ENCODE measurements at regions of chr9 and their contacts with region 1.

Region 1: GRCh38 chr9:33225319-33226149 is 14.4 kb upstream of the SPINK4 start:
- DNase-seq: peak; percentile 85
- ATAC-seq: peak; percentile 75
- H3K4me3 Mint-ChIP-seq: no peak overlapping the region
- H3K27ac Mint-ChIP-seq: no peak overlapping the region
- H3K4me1 Mint-ChIP-seq: peaks cover 15% of the 10 kb centered on the region
- H3K27me3 Mint-ChIP-seq: peaks cover 1% of the 10 kb centered on the region
- CTCF ChIP-seq: peak; percentile 81

Region 2: DNA sequence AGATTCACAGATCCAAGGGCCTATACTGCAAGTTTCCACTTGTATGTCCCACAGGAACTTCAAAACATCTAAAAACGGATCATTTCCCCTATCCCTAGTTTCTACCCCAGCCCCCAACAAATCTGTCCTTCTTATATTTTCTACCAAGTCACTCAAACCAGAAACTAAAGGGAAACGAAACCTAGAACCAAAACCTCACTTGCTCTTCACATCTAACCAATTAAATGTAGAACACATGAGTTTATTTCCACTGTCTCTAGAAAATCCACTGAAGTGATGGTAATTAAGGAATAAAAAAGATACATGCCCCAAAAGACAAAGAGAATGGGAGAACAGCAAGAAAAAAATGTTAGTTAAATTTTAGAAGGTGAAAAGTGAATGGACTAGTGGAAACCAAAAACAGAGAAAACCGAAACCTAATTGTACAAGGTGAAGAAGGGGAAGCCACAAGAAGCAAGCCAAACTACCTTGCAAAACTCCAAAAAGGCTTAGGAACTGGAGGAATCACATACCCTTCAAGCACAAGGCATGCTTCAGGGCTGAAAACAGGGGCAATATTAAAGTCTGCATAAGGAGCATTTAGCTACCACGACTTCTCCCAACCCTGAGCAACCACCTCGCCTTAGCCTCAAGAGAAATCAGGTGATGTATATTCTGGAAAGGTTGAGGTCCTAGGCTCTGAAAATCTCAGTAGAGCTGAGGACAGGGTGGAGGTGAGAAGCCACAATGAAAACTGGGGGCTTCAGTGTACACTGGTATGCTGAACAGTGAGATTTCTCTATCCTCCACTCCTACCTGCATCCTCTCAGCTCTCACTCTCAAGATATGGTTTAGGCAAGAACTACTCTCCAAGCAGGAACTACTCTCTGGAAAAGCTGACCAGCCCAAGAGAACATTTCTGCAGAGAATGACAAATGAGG is 160.1 kb before region 1 on chr9:
- CTCF ChIA-PET with region 1: interaction called, 11 read pairs
- POLR2A ChIA-PET with region 1: interaction called, 3 read pairs
- intact Hi-C with region 1: no loop called
- DNase-seq: no peak
- ATAC-seq: no peak
- H3K4me3 Mint-ChIP-seq: no peak overlapping the region
- H3K27ac Mint-ChIP-seq: peak overlapping the region; percentile 39
- H3K4me1 Mint-ChIP-seq: peaks cover 12% of the 10 kb centered on the region
- H3K27me3 Mint-ChIP-seq: no peaks in the 10 kb centered on the region
- CTCF ChIP-seq: no peak

Region 3: DNA sequence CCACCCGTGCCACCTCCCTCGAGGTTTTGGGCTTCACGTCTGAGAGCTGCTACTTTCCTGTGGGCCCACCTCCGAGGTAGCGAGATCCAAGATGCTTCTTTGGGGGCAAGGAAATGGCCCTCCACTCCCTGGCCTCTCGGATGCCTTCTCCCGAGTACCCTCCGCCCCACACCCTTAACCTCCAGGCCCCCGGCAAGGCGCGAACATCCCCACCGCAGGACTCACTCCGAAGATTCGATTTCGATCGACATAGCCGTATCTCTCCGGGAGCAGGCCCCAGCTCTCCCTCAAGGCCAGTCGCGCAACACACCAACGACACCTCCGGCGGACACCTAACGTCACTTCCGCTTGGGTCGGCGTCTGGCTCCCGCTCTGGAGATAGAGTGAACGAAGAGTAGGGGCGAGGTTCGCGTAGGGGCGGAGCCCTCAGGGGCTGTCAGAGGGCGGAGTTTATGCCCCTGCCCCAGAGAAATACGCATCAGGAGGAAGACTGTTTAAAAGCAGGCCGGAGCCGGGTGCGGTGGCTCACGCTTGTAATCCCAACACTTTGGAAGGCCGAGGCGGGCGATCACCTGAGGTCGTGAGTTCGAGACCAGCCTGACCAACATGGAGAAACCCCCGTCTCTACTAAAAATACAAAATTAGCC is 149.1 kb before region 1 on chr9 and contains the start of gene SMU1:
- CTCF ChIA-PET with region 1: interaction called, 25 read pairs
- POLR2A ChIA-PET with region 1: interaction called, 3 read pairs
- intact Hi-C with region 1: loop called (anchors 1 kb)
- DNase-seq: peak; percentile 98
- ATAC-seq: peak; percentile 97
- H3K4me3 Mint-ChIP-seq: peak within 1 kb of the TSS; percentile 94
- H3K27ac Mint-ChIP-seq: peak within 1 kb of the TSS; percentile 99
- H3K4me1 Mint-ChIP-seq: peaks cover 48% of the 10 kb centered on the region
- H3K27me3 Mint-ChIP-seq: no peaks in the 10 kb centered on the region
- CTCF ChIP-seq: no peak
- total RNA-seq, gene SMU1: 23.8 to 23.9 TPM

Region 4: GRCh38 chr9:33167046-33167808 is 58.3 kb before region 1 on chr9 and contains the start of gene B4GALT1:
- CTCF ChIA-PET with region 1: interaction called, 11 read pairs
- POLR2A ChIA-PET with region 1: no interaction called
- intact Hi-C with region 1: no loop called
- DNase-seq: peak; percentile 96
- ATAC-seq: peak; percentile 79
- H3K4me3 Mint-ChIP-seq: peak within 1 kb of the TSS; percentile 94
- H3K27ac Mint-ChIP-seq: peak within 1 kb of the TSS; percentile 97
- H3K4me1 Mint-ChIP-seq: peaks cover 46% of the 10 kb centered on the region
- H3K27me3 Mint-ChIP-seq: no peaks in the 10 kb centered on the region
- CTCF ChIP-seq: no peak
- total RNA-seq, gene B4GALT1: 41.2 to 41.4 TPM

Region 5: GRCh38 chr9:33239921-33240320 is 14.4 kb after region 1 on chr9 and contains the start of gene SPINK4:
- CTCF ChIA-PET with region 1: interaction called, 14 read pairs
- POLR2A ChIA-PET with region 1: no interaction called
- intact Hi-C with region 1: no loop called
- DNase-seq: no peak
- ATAC-seq: peak; percentile 30
- H3K4me3 Mint-ChIP-seq: no peak within 1 kb of the TSS
- H3K27ac Mint-ChIP-seq: no peak within 1 kb of the TSS
- H3K4me1 Mint-ChIP-seq: no peaks in the 10 kb centered on the region
- H3K27me3 Mint-ChIP-seq: no peaks in the 10 kb centered on the region
- CTCF ChIP-seq: no peak
- total RNA-seq, gene SPINK4: not detected

Region 6: DNA sequence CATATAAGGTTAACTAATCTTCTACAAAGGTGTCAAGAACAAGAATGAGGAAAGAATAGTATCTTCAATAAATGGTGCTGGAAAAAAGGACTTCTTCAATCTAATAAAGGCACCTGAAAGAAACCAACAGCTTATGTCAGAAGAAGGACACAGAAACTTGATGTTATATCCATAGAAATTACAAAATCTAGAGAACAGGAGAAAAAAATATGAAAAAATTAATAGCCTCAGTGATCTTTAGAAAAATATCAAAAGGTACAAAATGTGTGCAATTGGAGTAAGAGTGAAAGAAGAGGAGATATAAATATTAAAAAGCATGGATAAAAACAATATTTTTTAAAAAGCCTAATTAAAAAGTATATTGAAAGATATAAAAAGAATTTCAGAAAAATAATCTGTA is 551.0 kb after region 1 on chr9:
- CTCF ChIA-PET with region 1: no interaction called
- POLR2A ChIA-PET with region 1: no interaction called
- intact Hi-C with region 1: no loop called
- DNase-seq: no peak
- ATAC-seq: no peak
- H3K4me3 Mint-ChIP-seq: no peak overlapping the region
- H3K27ac Mint-ChIP-seq: no peak overlapping the region
- H3K4me1 Mint-ChIP-seq: peaks cover 3% of the 10 kb centered on the region
- H3K27me3 Mint-ChIP-seq: peaks cover 3% of the 10 kb centered on the region
- CTCF ChIP-seq: no peak

Region 7: DNA sequence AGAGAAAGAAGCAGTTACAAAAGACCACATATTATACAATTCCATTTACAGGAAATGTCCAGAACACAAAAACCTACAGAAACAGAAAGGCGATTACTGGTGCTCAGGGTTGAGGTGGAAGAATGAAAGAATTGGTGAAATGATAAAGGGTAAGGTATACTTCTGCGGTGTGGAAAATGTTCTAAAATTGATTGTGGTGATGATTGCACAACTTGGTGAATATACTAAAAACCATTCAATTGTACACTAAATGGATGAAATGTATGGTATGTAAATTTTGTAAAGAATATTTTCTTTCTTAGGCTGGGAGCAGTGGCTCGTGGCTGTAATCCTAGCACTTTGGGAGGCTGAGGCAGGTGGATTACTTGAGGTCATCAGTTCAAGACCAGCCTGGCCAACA is 750.9 kb after region 1 on chr9:
- CTCF ChIA-PET with region 1: no interaction called
- POLR2A ChIA-PET with region 1: no interaction called
- intact Hi-C with region 1: no loop called
- DNase-seq: no peak
- ATAC-seq: no peak
- H3K4me3 Mint-ChIP-seq: no peak overlapping the region
- H3K27ac Mint-ChIP-seq: no peak overlapping the region
- H3K4me1 Mint-ChIP-seq: no peaks in the 10 kb centered on the region
- H3K27me3 Mint-ChIP-seq: no peaks in the 10 kb centered on the region
- CTCF ChIP-seq: no peak

Measured in activated CD8-positive, alpha-beta T cell treated with anti-CD3 and anti-CD28 coated beads for 36 hours (primary cell).